H1 (cell line): ENCODE measurements at regions of chr2 and their contacts with region 1.

Region 1: GRCh38 chr2:179340668-179341067 is 76.0 kb upstream of the SESTD1 start:
- DNase-seq: no peak
- H3K4me3 ChIP-seq: no peak overlapping the region
- H3K27ac ChIP-seq: no peak overlapping the region
- H3K4me1 ChIP-seq: peaks cover 0 to 11% (median 2%) of the 10 kb centered on the region in 4 experiments; a peak in 4 of 7 replicates
- H3K27me3 ChIP-seq: no peaks in the 10 kb centered on the region
- CTCF ChIP-seq: peak in 2 of 3 experiments; percentile 40 to 59; a peak in 3 of 4 replicates
- EP300 ChIP-seq: no peak
- POLR2A ChIP-seq: no peak
- RAD21 ChIP-seq: peak; percentile 65 to 66

Region 2: DNA sequence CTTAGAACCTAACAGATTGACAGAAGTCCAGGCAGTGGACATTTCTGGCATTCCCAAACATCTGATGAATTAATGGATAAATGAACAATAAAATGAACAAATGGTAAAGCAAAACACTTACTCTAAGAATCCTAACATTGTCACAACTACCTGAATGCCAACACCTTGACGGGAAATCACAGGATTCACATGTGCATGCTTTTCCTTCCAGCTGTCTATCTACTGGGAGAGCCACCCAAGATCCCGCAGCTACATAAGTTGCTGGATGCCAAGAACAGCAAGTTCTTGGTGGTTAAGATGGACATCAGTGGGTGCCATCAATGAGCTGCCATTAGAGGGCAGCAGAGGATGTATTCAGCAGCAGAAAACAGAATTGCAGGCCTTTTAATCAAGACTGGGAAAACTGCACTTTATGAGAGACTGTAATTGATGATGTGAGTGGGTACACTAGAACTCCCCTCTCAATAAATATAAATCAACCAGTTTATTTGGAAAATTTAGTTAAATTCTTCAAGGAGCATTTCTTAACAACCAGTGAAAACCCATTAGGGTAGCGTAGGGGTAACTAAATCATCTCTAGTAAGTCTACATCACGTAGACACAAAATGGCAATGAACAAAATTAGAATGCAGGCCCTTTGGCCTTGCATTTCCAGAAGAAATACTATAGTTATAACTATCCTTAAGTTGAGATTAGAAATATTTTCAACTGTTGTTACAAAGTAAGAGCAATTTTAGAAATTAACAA is 121.6 kb before region 1 on chr2:
- CTCF ChIA-PET with region 1: interaction called, 12 read pairs
- POLR2A ChIA-PET with region 1: no interaction called
- DNase-seq: peak in 1 of 2 experiments; percentile 50
- H3K4me3 ChIP-seq: no peak overlapping the region
- H3K27ac ChIP-seq: no peak overlapping the region
- H3K4me1 ChIP-seq: no peaks in the 10 kb centered on the region
- H3K27me3 ChIP-seq: no peaks in the 10 kb centered on the region
- CTCF ChIP-seq: peak; percentile 44 to 90 (median 84)
- EP300 ChIP-seq: no peak
- POLR2A ChIP-seq: no peak
- RAD21 ChIP-seq: peak; percentile 87 to 93